Gastrocnemius medialis (tissue), 4 donors: ENCODE measurements at regions of chr2 and their contacts with region 1.

Region 1: DNA sequence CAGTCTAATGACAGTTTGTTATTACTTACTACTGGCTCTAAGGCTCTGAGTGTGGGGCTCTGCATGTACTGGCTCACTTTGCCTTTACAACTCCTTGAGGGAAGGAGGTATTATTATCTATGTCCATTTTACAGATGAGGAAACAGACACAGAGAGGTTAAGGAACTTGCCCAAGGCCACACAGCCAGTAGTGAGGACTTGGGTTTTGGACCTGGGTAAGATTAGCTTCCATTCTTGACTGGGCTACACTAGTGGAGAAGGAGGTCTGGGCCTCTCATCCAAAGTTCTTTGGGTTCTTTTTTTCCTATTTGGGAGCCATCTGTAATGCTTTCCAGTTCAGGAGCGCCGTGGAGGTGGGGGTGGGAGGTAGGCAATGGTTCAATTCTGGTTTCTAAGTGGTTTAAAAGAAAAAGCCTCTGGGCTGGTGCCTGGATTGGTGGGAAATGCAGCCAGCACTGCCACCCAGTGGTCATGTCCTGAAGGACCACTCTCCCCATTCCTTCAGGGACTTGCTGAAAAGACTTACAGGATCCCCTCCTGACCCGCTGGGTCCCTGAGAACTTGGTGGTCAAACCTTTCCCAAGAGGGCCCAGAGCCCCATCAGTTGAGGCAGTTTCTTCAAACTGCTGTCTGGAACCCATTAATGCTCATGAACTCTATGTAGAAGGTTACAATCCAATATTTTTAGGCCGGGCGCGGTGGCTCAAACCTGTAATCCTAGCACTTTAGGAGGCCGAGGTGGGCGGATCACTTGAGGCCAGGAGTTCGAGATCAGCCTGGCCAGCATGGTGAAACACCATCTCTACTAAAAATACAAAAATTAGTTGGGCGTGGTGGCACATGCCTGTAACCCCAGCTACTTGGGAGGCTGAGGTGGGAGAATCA is 38.6 kb upstream of the NOTO start:
- DNase-seq: peak; percentile 16 to 32
- ATAC-seq: peak; percentile 63 to 81
- H3K4me3 ChIP-seq: no peak overlapping the region
- H3K27ac ChIP-seq: no peak overlapping the region
- H3K4me1 ChIP-seq: no peaks in the 10 kb centered on the region
- H3K27me3 ChIP-seq: no peaks in the 10 kb centered on the region
- CTCF ChIP-seq: peak; percentile 68 to 88 (median 78)
- POLR2A ChIP-seq: no peak

Region 2: GRCh38 chr2:72745679-72746368 is 417.9 kb before region 1 on chr2:
- in situ Hi-C with region 1: no loop called
- intact Hi-C with region 1: no loop called
- DNase-seq: no peak
- ATAC-seq: peak; percentile 68 to 78
- H3K4me3 ChIP-seq: peak overlapping the region in 2 of 4 donors; percentile 1 to 19
- H3K27ac ChIP-seq: no peak overlapping the region
- H3K4me1 ChIP-seq: peaks cover 0 to 10% of the 10 kb centered on the region in 2 donors
- H3K27me3 ChIP-seq: no peaks in the 10 kb centered on the region
- CTCF ChIP-seq: peak; percentile 20 to 79 (median 69)
- POLR2A ChIP-seq: no peak

Region 3: GRCh38 chr2:72993147-72993932 is 170.4 kb before region 1 on chr2:
- in situ Hi-C with region 1: loop called in 3 of 4 experiments (anchors 5 to 25 kb)
- intact Hi-C with region 1: loop called (anchors 2 kb)
- DNase-seq: no peak
- ATAC-seq: no peak
- H3K4me3 ChIP-seq: no peak overlapping the region
- H3K27ac ChIP-seq: no peak overlapping the region
- H3K4me1 ChIP-seq: no peaks in the 10 kb centered on the region
- H3K27me3 ChIP-seq: no peaks in the 10 kb centered on the region
- CTCF ChIP-seq: peak; percentile 54 to 82 (median 78)
- POLR2A ChIP-seq: no peak

Region 4: DNA sequence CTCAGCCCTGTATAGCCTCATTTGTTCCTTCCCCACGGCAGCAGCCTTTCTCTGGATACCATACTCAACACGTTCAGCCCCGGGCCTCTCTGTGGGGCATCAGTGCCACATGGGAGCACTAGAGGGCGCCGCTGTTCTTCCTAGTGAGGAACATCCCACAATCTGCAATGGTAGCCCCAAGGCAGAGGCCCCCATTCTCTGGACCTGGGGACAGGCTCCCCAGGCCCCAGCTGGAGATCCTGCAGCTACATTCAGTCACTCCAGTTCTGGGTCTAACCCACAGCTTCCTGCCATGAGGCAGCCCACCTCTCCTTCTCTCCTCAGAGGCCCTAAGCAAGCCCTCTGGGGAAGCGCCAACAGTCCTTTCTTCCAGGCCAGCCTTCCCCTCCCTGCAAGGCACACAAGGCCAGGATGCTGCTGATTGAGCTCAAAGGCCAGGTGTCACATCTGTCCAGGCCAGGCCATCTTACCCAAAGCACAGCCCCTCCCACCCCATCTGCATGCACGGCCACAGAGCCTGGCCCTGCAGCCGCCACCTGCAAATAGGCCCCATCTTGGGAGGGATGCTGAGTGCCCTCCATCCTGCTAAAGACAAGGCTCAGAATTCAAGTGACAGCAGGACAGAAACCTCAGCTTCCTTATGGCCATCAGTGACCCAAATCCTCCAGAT is 77.9 kb before region 1 on chr2:
- in situ Hi-C with region 1: loop called (anchors 5 kb)
- intact Hi-C with region 1: no loop called
- DNase-seq: peak; percentile 52 to 74
- ATAC-seq: peak; percentile 79 to 82
- H3K4me3 ChIP-seq: no peak overlapping the region
- H3K27ac ChIP-seq: no peak overlapping the region
- H3K4me1 ChIP-seq: no peaks in the 10 kb centered on the region
- H3K27me3 ChIP-seq: no peaks in the 10 kb centered on the region
- CTCF ChIP-seq: peak; percentile 81 to 96 (median 89)
- POLR2A ChIP-seq: no peak

Region 5: DNA sequence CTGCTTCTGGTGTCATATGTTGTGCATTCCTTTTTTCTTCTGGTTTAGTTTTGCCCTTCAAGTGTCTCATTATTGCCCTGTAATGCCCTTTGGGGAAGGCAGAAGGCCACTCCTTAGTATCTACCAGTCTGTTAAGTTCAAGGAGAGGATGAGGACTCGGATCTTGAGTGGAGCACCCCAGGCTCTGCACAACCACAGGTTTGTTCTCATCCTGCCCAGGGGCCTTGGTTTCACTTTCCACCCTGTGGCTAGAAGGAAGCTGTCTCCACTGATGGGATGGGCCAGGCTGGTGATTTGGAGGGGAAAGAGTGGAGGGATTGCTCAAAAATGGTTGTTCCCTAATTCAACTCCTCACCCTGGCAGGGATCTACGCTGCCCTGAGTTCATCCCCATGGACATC is 20.8 kb before region 1 on chr2:
- in situ Hi-C with region 1: no loop called
- intact Hi-C with region 1: no loop called
- DNase-seq: no peak
- ATAC-seq: no peak
- H3K4me3 ChIP-seq: no peak overlapping the region
- H3K27ac ChIP-seq: no peak overlapping the region
- H3K4me1 ChIP-seq: no peaks in the 10 kb centered on the region
- H3K27me3 ChIP-seq: no peaks in the 10 kb centered on the region
- CTCF ChIP-seq: no peak
- POLR2A ChIP-seq: no peak